ENCODE measurements at regions of chr7 and their contacts with region 1.

Region 1: GRCh38 chr7:81594767-81595166 is 175.1 kb downstream of the HGF start:
- DNase-seq: peak in 1 of 2 donors; percentile 24
- ATAC-seq: peak in 4 of 8 donors; percentile 24 to 85 (median 50)
- H3K4me3 ChIP-seq: no peak overlapping the region
- H3K27ac ChIP-seq: no peak overlapping the region
- H3K4me1 ChIP-seq: no peaks in the 10 kb centered on the region
- H3K27me3 ChIP-seq: no peaks in the 10 kb centered on the region
- CTCF ChIP-seq: no peak

Region 2: DNA sequence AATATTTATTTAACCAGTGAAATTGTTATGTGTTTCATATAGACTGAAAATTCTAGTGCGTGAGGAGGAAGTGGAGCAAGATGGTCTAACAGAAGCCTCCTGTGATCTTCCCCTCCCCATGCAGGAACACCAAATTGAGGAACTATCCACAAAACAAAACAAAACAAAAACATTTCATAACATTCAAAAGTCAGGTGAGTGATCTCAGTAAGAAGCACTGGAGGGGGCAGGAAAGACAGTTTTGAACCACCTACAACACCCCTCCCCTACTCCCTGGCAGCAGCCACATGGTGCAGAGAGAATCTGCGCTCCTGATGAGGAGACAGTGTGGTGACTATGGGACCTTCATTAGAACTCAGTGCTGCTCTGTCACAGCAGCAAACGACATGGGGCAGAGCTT is 454.0 kb before region 1 on chr7:
- intact Hi-C with region 1: no loop called
- DNase-seq: no peak
- ATAC-seq: peak in 4 of 8 donors; percentile 25 to 61 (median 48)
- H3K4me3 ChIP-seq: no peak overlapping the region
- H3K27ac ChIP-seq: peak overlapping the region in 3 of 10 donors; percentile 35 to 78 (median 37)
- H3K4me1 ChIP-seq: peaks cover 0 to 21% (median 0%) of the 10 kb centered on the region in 9 donors
- H3K27me3 ChIP-seq: no peaks in the 10 kb centered on the region
- CTCF ChIP-seq: no peak

Region 3: DNA sequence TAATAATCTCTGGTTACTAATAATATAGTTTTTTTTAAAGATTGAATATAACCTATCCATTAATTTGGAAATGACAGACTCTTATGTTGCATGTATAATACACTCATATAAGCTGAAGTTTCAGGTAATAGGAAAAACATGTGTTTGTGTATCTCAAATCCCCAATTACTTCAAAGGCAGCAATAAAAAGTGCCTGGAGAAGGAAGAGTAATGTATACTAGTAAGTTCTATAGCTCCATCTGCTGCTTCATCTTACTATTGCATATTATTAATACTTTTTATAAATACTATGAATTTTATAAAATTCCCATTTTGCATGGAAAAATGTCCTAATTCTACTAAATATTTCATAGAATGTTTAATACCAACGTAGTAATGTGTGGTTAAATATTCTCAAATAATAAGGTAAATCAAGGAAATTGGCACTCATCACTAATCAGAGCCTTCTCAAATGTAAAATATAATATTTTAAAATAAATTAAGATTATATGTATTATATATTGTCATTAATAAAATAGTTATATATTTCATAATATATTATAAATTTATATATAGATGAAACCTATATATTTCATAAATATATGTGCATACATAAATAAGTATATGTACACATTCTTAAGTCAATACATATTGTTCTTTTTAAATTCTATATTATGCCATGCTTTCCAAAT is 136.8 kb before region 1 on chr7:
- intact Hi-C with region 1: no loop called
- DNase-seq: no peak
- ATAC-seq: no peak
- H3K4me3 ChIP-seq: no peak overlapping the region
- H3K27ac ChIP-seq: no peak overlapping the region
- H3K4me1 ChIP-seq: no peaks in the 10 kb centered on the region
- H3K27me3 ChIP-seq: no peaks in the 10 kb centered on the region
- CTCF ChIP-seq: peak in 7 of 9 donors; percentile 19 to 53 (median 38)

Region 4: GRCh38 chr7:81627536-81628287 is 32.9 kb after region 1 on chr7:
- intact Hi-C with region 1: no loop called
- DNase-seq: no peak
- ATAC-seq: no peak
- H3K4me3 ChIP-seq: no peak overlapping the region
- H3K27ac ChIP-seq: peak overlapping the region in 1 of 10 donors; percentile 60
- H3K4me1 ChIP-seq: peaks cover 0 to 8% (median 0%) of the 10 kb centered on the region in 9 donors
- H3K27me3 ChIP-seq: no peaks in the 10 kb centered on the region
- CTCF ChIP-seq: no peak

Region 5: DNA sequence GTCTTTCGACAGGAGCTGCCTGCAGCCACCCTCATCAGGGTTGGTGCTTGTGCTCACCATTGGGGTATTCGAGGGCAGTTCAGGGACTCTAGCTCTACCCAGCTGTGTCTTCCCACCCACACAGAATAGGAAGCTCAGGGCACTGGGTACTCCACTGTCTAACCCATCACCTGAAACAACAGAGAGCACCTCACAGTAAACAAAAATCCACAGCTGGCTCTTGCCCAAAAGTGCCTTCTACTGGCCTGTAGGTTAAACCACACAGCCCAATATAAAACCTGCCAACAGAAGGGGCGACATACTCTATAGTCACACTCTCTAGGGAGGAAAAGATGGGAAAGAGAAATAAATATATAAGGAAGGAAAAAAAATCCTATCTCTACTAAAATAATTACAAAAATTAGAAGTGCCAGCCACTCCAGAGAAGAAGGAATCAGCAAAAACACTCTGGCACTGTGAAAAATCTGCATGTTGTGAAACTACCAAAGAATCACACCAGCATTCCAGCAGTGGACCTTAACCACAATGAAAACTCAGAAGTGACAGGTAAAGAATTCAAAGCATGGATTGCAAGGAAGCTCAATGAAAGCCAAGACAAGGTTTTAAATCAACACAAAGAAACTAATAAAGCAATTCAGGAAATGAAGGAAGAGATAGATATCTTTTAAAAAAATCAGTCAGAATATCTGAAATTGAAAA is 65.1 kb after region 1 on chr7:
- intact Hi-C with region 1: loop called in 1 of 10 experiments (anchors 10 kb)
- DNase-seq: no peak
- ATAC-seq: no peak
- H3K4me3 ChIP-seq: no peak overlapping the region
- H3K27ac ChIP-seq: no peak overlapping the region
- H3K4me1 ChIP-seq: no peaks in the 10 kb centered on the region
- H3K27me3 ChIP-seq: no peaks in the 10 kb centered on the region
- CTCF ChIP-seq: no peak

Measured in heart right ventricle (tissue), 16 donors.